ENCODE measurements at regions of chr9 and their contacts with region 1.

Region 1: GRCh38 chr9:76530458-76531110 is 71.6 kb downstream of the GCNT1 start:
- DNase-seq: no peak
- H3K4me3 ChIP-seq: no peak overlapping the region
- CTCF ChIP-seq: no peak

Region 2: GRCh38 chr9:76474419-76474818 is 56.2 kb before region 1 on chr9:
- in situ Hi-C with region 1: loop called (anchors 5 kb)
- DNase-seq: no peak
- H3K4me3 ChIP-seq: no peak overlapping the region
- CTCF ChIP-seq: no peak